ENCODE measurements at regions of chr3 and their contacts with region 1.

Region 1: DNA sequence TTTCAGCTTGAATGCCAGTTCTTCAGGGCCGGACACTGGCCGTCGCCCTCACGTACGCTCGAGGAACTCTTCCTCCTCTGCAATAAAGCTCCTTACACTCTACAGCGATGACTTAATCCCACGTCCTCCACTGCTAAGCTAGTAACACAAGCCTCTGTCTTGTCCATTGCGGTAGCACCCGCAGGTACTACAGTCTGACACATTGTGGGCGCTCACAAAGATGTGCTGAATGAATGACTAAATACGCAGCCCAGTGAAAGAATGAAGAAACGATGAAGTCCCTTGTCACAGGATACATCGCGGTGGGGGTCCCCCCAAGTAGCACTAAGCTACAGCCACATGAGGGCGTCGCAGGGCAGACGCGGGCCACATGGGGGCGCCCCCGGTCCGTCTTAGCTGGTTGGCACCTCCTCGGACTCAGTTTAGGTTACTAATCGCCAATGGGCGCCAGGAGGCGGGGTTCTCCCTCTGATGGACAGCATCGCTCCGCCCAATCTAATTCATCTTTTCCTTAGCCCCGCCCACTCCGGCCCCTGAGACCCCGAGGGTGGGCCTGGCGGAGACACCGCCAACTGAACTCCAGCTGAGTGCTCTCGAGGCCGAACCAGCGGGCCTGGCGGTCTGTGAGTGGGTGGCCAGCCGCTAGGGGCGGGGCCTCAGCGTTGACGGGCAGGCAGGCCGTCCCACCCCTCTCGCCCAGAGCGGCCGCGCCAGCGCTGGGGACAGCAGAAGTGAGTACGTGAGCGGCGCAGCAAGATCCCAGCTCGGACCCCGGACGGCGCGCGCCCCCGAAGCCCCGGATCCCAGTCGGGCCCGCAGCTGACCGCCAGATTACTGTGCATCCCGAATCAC is at the start of gene EPHB3:
- DNase-seq: peak; percentile 100
- H3K4me3 ChIP-seq: peak within 1 kb of the TSS; percentile 64 to 91 (median 72)
- H3K27ac ChIP-seq: peak within 1 kb of the TSS; percentile 80 to 89 (median 81)
- H3K4me1 ChIP-seq: peaks cover 0 to 53% (median 35%) of the 10 kb centered on the region in 4 donors
- H3K27me3 ChIP-seq: no peaks in the 10 kb centered on the region
- CTCF ChIP-seq: peak; percentile 98 to 99 (median 98)
- EP300 ChIP-seq: no peak
- POLR2A ChIP-seq: peak; percentile 74 to 89
- total RNA-seq, gene EPHB3: 1.8 to 2.8 (median 2.2) TPM

Region 2: GRCh38 chr3:184727357-184728009 is 166.2 kb after region 1 on chr3:
- intact Hi-C with region 1: loop called (anchors 1 kb)
- DNase-seq: peak; percentile 78
- H3K4me3 ChIP-seq: no peak overlapping the region
- H3K27ac ChIP-seq: peak overlapping the region in 1 of 4 donors; percentile 37
- H3K4me1 ChIP-seq: peaks cover 0 to 8% (median 4%) of the 10 kb centered on the region in 4 donors
- H3K27me3 ChIP-seq: no peaks in the 10 kb centered on the region
- CTCF ChIP-seq: peak; percentile 42 to 75 (median 57)
- EP300 ChIP-seq: no peak
- POLR2A ChIP-seq: no peak

Region 3: DNA sequence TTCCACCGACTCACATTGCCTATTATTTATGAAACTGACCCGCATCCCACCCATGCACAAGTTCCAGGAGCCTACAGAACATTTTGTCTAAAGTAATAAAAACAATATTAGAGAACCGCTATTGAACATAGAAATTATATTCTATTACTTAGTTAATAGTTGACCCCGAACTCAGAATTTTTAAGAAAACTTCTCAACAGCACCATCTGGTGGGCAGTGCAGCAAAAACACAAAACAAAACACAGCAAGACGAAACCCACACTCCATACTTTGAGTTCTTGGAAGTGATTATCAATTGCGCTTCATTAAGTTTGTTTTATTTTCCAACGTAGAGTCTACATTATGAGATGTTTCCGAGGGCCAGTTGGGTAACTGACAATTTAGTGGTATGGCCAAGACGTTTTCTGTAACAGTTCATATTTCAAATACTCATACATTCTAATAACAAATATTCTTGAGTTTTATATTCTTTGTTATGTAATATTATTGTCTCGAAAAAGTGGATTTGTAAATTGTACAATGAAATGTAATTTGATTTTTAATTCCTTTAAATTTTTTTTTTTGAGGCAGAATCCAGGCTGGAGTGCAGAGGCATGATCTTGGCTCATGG is 615.6 kb after region 1 on chr3:
- intact Hi-C with region 1: no loop called
- DNase-seq: no peak
- H3K4me3 ChIP-seq: no peak overlapping the region
- H3K27ac ChIP-seq: no peak overlapping the region
- H3K4me1 ChIP-seq: peaks cover 0 to 14% (median 11%) of the 10 kb centered on the region in 4 donors
- H3K27me3 ChIP-seq: no peaks in the 10 kb centered on the region
- CTCF ChIP-seq: peak; percentile 64 to 70 (median 70)
- EP300 ChIP-seq: no peak
- POLR2A ChIP-seq: no peak